AG04449 (cell line): ENCODE measurements at regions of chr18 and their contacts with region 1.

Region 1: DNA sequence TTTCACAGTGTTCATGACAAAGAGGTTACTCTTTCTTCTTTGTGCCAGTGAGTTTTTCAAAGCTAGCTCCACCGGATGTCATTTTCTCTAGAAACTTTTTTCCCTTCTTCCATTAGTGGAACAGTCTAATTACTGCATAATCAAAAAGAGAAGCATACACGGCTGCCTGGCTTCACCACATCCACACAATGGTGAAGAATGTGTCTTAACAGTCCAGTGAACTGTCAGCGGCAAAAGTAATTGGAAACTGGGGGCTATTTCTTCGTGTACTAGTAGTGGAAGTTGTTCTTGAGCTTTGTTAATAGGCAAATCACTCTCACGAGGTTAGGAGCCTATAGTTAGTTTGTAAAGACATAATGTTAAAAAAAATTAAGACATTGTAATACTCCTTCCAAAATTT is 32.9 kb upstream of the PIK3C3 start:
- DNase-seq: no peak
- H3K4me3 ChIP-seq: no peak overlapping the region
- CTCF ChIP-seq: no peak

Region 2: DNA sequence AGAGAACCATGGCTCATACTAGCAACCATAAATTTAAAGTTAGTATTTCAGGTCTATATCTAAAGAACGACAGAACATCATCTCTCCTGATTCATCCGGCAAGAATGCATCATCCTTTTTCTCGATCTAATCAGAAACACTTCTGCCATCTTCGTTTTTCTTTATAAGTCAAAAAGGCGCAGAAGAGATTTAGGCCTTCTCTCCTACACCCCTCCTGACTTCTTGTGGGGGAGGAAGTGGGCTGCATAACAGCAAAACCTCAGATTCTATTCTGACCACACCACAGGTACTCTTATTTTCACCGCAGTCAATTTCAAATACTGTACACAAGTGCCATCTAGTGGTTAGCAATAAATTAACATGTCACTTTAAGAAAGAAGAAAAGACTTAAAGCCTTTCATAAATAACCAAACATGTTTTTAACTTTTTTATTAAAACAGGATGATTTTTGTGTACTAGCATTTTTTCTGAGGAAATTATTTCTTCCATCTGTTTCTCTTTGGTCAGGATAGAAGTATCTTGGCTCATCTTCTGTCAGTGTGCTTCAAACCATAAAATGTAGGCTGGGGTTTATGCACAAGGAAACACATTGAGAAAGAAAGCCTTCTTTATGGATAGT is 15.5 kb before region 1 on chr18:
- CTCF ChIA-PET with region 1: interaction called, 38 read pairs
- POLR2A ChIA-PET with region 1: no interaction called
- DNase-seq: peak; percentile 7
- H3K4me3 ChIP-seq: peak overlapping the region; percentile 33
- CTCF ChIP-seq: peak; percentile 34

Region 3: DNA sequence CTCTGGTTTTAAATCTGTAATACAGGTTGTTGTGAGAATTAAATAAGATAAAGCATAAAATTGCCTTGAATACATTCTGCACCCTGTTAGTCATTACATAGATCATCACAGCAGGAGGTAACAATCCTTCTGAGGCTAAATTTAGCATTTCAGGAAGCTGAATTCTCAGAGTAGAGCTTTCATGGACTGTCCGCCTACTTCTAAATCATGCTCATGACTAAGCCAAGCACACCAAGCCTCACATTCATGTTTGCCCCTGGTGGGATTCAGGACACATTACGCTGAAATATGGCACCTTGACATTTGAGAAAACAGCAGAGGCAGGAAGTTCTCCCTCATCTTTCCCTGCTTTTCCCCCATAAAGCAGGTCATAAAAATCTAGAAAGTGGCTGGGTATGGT is 16.3 kb after region 1 on chr18:
- CTCF ChIA-PET with region 1: no interaction called
- POLR2A ChIA-PET with region 1: no interaction called
- DNase-seq: peak; percentile 92
- H3K4me3 ChIP-seq: no peak overlapping the region
- CTCF ChIP-seq: peak; percentile 41